Activated naive CD8-positive, alpha-beta T cell treated with anti-CD3 and anti-CD28 coated beads, Interleukin-2, amount 10 ng/mL, durations not matched to agents 7 days and 5 days (primary cell): ENCODE measurements at regions of chr12 and their contacts with region 1.

Region 1: GRCh38 chr12:6335451-6336078 is 6.3 kb downstream of the TNFRSF1A start:
- DNase-seq: peak; percentile 84
- ATAC-seq: peak; percentile 57
- H3K4me3 Mint-ChIP-seq: no peak overlapping the region
- H3K27ac Mint-ChIP-seq: no peak overlapping the region
- H3K4me1 Mint-ChIP-seq: peaks cover 46% of the 10 kb centered on the region
- H3K27me3 Mint-ChIP-seq: no peaks in the 10 kb centered on the region

Region 2: GRCh38 chr12:6323340-6323994 is 12.1 kb before region 1 on chr12:
- POLR2A ChIA-PET with region 1: interaction called, 17 read pairs
- DNase-seq: peak; percentile 49
- ATAC-seq: peak; percentile 62
- H3K4me3 Mint-ChIP-seq: peak overlapping the region; percentile 76
- H3K27ac Mint-ChIP-seq: peak overlapping the region; percentile 94
- H3K4me1 Mint-ChIP-seq: peaks cover 45% of the 10 kb centered on the region
- H3K27me3 Mint-ChIP-seq: no peaks in the 10 kb centered on the region

Region 3: DNA sequence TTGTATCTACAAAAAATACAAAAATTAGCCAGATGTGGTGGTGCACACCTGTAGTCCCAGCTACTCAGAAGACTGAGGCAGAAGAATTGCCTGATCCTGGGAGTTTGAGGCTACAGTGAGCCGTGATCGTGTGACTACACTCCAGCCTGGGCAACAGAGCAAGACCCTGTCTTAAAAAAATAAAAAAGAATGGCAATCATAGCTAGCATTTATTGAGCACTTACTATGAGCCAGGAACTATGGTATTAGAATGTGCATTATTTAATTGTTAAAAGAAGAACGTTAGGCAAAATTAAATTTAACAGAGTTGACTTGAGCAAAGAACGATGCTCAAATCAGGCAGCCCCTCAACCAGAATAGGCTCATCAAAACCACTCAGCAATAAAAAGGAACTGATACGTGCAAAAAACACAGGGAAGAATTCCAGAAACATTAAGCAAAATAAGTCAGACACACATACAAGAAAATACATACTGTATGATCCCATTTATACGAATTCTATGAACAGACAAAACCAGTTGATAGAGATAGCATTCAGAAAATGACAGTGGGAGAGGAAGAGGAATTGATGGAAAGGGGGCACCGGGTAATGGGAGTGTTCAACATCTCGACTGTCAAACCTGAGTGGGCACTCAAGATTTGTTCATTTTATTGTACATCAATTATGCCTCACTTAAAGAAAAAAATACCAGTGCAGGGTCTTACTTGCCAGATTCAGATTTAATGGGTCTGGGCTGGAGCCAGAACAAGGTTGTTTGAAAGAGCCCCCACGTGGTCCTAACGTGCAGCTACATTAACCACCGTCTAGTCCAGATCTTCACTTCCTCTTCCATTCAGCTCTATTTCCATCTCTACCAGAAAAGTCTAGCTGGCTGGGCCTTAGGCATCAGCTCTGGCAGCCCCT is 31.8 kb after region 1 on chr12:
- POLR2A ChIA-PET with region 1: interaction called, 122 read pairs
- DNase-seq: no peak
- ATAC-seq: peak; percentile 65
- H3K4me3 Mint-ChIP-seq: peak overlapping the region; percentile 25
- H3K27ac Mint-ChIP-seq: peak overlapping the region; percentile 74
- H3K4me1 Mint-ChIP-seq: peaks cover 32% of the 10 kb centered on the region
- H3K27me3 Mint-ChIP-seq: no peaks in the 10 kb centered on the region

Region 4: GRCh38 chr12:6443361-6443983 is 107.9 kb after region 1 on chr12:
- POLR2A ChIA-PET with region 1: interaction called, 11 read pairs
- DNase-seq: no peak
- ATAC-seq: peak; percentile 12
- H3K4me3 Mint-ChIP-seq: peak overlapping the region; percentile 94
- H3K27ac Mint-ChIP-seq: peak overlapping the region; percentile 94
- H3K4me1 Mint-ChIP-seq: peaks cover 54% of the 10 kb centered on the region
- H3K27me3 Mint-ChIP-seq: no peaks in the 10 kb centered on the region

Region 5: DNA sequence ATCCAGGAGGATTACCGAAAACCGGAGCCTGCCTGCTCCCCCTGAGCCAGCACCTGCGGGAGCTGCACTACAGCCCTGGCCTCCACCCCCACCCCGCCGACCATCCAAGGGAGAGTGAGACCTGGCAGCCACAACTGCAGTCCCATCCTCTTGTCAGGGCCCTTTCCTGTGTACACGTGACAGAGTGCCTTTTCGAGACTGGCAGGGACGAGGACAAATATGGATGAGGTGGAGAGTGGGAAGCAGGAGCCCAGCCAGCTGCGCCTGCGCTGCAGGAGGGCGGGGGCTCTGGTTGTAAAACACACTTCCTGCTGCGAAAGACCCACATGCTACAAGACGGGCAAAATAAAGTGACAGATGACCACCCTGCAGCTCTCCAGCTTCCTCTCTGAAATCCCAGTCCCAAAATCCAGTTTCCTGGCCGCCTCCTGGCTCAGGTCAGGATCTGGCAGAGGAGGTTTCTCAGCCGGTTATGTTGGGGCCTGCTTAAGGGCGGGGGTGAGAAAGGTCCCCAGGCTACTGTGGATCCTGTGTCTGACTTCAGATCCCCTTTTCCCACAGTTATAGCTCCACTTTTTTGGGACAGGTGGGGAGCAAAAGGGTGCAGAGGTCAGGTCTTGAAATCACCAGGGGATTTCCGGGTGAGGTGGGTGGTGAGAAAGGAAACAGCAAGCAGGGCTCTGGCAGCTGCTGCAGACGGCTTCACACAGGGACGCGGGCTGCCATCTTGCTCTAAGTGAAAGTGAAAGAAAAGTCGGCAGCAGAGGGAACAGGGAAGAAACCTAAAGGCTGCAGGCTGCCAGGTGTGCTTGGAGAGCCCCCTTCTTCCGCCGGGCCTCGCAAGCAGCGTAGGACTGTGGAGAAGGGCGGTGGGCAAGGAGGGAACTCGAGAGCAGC is 116.0 kb after region 1 on chr12 and contains the start of gene TAPBPL:
- POLR2A ChIA-PET with region 1: interaction called, 29 read pairs
- DNase-seq: peak; percentile 73
- ATAC-seq: peak; percentile 83
- H3K4me3 Mint-ChIP-seq: peak within 1 kb of the TSS; percentile 98
- H3K27ac Mint-ChIP-seq: peak within 1 kb of the TSS; percentile 98
- H3K4me1 Mint-ChIP-seq: peaks cover 51% of the 10 kb centered on the region
- H3K27me3 Mint-ChIP-seq: no peaks in the 10 kb centered on the region
- total RNA-seq, gene TAPBPL: 49.4 to 50.1 TPM

Region 6: DNA sequence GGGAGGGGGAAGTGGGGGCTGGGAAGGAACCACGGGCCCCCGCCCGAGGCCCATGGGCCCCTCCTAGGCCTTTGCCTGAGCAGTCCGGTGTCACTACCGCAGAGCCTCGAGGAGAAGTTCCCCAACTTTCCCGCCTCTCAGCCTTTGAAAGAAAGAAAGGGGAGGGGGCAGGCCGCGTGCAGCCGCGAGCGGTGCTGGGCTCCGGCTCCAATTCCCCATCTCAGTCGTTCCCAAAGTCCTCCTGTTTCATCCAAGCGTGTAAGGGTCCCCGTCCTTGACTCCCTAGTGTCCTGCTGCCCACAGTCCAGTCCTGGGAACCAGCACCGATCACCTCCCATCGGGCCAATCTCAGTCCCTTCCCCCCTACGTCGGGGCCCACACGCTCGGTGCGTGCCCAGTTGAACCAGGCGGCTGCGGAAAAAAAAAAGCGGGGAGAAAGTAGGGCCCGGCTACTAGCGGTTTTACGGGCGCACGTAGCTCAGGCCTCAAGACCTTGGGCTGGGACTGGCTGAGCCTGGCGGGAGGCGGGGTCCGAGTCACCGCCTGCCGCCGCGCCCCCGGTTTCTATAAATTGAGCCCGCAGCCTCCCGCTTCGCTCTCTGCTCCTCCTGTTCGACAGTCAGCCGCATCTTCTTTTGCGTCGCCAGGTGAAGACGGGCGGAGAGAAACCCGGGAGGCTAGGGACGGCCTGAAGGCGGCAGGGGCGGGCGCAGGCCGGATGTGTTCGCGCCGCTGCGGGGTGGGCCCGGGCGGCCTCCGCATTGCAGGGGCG is 198.5 kb after region 1 on chr12 and contains the start of gene GAPDH:
- POLR2A ChIA-PET with region 1: interaction called, 16 read pairs
- DNase-seq: peak; percentile 91
- ATAC-seq: peak; percentile 62
- H3K4me3 Mint-ChIP-seq: peak within 1 kb of the TSS; percentile 100
- H3K27ac Mint-ChIP-seq: peak within 1 kb of the TSS; percentile 98
- H3K4me1 Mint-ChIP-seq: peaks cover 37% of the 10 kb centered on the region
- H3K27me3 Mint-ChIP-seq: no peaks in the 10 kb centered on the region
- total RNA-seq, gene GAPDH: 4,618 to 4,824 TPM